OCI-LY7 (cell line): ENCODE measurements at regions of chr11 and their contacts with region 1.

Region 1: GRCh38 chr11:61747192-61747966 is 5.1 kb upstream of the MYRF start:
- DNase-seq: peak; percentile 53
- H3K4me3 ChIP-seq: no peak overlapping the region
- H3K27ac ChIP-seq: no peak overlapping the region
- H3K4me1 ChIP-seq: no peaks in the 10 kb centered on the region
- CTCF ChIP-seq: peak; percentile 90

Region 2: DNA sequence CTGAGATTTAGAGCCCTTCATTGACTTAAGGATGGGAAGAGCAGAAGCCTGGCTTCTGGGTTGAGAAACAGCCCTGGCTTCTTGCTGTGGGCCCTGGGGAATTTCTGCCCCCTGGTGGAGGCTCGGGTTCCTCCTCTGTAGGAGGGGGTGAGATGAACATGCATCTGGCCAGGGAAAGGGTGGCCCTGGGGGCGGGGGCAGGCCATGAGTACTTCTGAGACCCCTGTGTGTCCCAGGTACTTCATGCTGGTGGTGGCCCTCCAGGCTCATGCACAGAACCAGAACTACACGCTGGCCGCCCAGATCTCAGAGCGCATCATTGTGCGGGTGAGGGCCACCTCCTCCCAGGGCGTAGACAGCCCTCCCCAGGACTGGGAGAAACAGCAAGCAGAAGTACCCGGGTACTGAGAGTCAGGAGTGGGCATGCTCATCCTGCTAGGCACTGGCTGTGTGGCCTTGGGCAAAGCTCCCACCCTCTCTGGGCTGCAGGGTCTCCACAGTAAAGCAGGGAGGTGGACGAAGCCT is 29.2 kb after region 1 on chr11:
- CTCF ChIA-PET with region 1: no interaction called
- POLR2A ChIA-PET with region 1: no interaction called
- intact Hi-C with region 1: loop called (anchors 1 kb)
- DNase-seq: peak; percentile 65
- H3K4me3 ChIP-seq: no peak overlapping the region
- H3K27ac ChIP-seq: no peak overlapping the region
- H3K4me1 ChIP-seq: peaks cover 9% of the 10 kb centered on the region
- CTCF ChIP-seq: peak; percentile 83

Region 3: GRCh38 chr11:62108017-62108750 is 360.8 kb after region 1 on chr11:
- CTCF ChIA-PET with region 1: interaction called, 3 read pairs
- POLR2A ChIA-PET with region 1: no interaction called
- intact Hi-C with region 1: loop called (anchors 5 kb)
- DNase-seq: peak; percentile 74
- H3K4me3 ChIP-seq: no peak overlapping the region
- H3K27ac ChIP-seq: no peak overlapping the region
- H3K4me1 ChIP-seq: no peaks in the 10 kb centered on the region
- CTCF ChIP-seq: peak; percentile 90